ENCODE measurements at regions of chr1 and their contacts with region 1.

Region 1: DNA sequence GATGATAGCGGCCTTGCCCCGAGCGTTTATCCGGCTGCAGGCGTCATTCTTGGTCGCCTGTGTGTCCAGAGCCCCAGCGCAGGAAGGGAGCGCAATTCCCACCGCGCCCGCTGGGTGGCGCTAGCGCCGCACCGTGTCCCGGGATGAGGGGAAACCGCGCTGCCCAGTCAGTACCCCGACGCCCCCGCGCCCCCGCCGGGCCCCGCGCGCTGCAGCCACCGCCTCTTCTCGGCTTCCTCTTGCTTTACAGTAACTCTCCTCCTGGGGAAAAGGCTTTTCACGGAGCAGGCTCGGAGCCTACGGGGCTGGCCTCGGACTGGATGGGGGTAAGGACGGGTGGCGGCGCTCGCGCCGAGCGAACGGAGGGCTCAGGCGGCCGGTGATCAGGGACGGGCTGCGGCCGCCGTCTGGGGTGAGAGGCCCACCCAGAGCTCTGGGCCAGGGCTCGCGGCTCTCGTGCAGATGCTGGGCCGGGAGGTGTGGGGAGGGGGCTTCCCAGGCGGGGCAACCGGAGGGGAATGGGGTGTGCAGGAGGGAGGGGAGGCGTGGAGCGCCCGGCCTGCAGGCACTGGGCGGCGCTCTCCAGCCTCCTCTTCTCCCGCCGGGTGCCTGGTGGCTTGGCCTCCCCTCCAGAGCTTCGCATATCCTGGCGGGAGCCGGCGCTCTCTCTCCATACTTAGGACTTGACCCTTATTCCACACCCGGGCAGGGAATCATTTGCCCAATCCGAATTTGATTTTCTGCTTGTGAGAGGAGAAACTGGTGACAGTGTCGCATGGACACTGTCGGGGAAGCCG is 29.8 kb downstream of the TEX35 start:
- DNase-seq: peak; percentile 97
- ATAC-seq: peak; percentile 76
- H3K4me3 Mint-ChIP-seq: peak overlapping the region; percentile 87
- H3K27ac Mint-ChIP-seq: peak overlapping the region; percentile 91
- H3K4me1 Mint-ChIP-seq: peaks cover 23% of the 10 kb centered on the region
- H3K27me3 Mint-ChIP-seq: no peaks in the 10 kb centered on the region; the same call in 1 of the 2 replicates
- CTCF ChIP-seq: peak; percentile 100

Region 2: DNA sequence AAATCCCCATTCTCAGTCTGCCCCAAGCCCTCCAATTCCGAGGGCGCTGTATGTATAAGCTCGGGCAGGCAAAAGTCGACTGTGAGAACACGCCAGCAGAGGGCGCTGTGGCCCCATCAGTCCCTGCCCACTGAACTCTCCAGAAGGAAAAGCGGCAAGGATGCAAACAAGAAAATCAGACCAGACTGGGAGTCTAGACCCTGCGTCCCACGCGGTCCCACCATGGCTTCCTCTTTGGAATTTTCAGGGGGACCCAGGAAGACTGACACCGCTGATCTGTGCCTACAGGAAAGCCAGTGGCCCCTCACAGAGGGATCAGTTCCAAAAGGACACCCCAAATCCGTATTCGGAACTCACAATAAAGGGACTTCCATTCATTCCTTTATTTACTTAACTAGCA is 10.4 kb before region 1 on chr1:
- CTCF ChIA-PET with region 1: interaction called, 28 read pairs
- POLR2A ChIA-PET with region 1: interaction called, 3 read pairs
- DNase-seq: peak; percentile 88
- ATAC-seq: peak; percentile 89
- H3K4me3 Mint-ChIP-seq: no peak overlapping the region
- H3K27ac Mint-ChIP-seq: no peak overlapping the region
- H3K4me1 Mint-ChIP-seq: 0 out of 2 replicates have a peak, but pooled peaks cover 2% of the 10 kb centered on the region
- H3K27me3 Mint-ChIP-seq: no peaks in the 10 kb centered on the region; the same call in 1 of the 2 replicates
- CTCF ChIP-seq: peak; percentile 96

Region 3: GRCh38 chr1:178581351-178582303 is 38.9 kb after region 1 on chr1:
- CTCF ChIA-PET with region 1: interaction called, 10 read pairs
- POLR2A ChIA-PET with region 1: no interaction called
- DNase-seq: peak; percentile 77
- ATAC-seq: peak; percentile 95
- H3K4me3 Mint-ChIP-seq: peak overlapping the region; percentile 42
- H3K27ac Mint-ChIP-seq: peak overlapping the region; percentile 98
- H3K4me1 Mint-ChIP-seq: peaks cover 59% of the 10 kb centered on the region
- H3K27me3 Mint-ChIP-seq: peaks cover 5% of the 10 kb centered on the region
- CTCF ChIP-seq: no peak

Region 4: DNA sequence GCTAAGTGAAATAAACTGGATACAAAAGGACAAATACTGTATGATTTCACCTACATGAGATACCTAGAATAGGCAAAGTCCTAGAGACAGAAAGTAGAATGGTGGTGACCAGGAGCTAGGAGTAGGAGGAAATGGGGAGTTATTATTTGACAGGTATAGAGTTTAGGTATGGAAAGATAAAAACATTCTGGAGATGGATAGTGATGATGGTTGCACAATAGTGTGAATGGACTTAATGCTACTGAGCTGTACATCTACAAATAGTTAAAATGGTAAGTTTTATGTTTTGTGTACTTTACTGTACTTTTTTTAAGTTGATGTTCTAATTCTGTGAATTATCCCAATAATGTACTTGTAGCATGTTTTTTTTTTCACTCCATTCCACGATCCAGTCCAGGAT is 122.8 kb after region 1 on chr1:
- CTCF ChIA-PET with region 1: no interaction called
- POLR2A ChIA-PET with region 1: no interaction called
- DNase-seq: no peak
- ATAC-seq: no peak
- H3K4me3 Mint-ChIP-seq: no peak overlapping the region
- H3K27ac Mint-ChIP-seq: no peak overlapping the region
- H3K4me1 Mint-ChIP-seq: no peaks in the 10 kb centered on the region
- H3K27me3 Mint-ChIP-seq: no peaks in the 10 kb centered on the region; the same call in 1 of the 2 replicates
- CTCF ChIP-seq: no peak

Region 5: GRCh38 chr1:178725603-178726517 is 183.1 kb after region 1 on chr1:
- CTCF ChIA-PET with region 1: interaction called, 19 read pairs
- POLR2A ChIA-PET with region 1: interaction called, 10 read pairs
- DNase-seq: peak; percentile 62
- ATAC-seq: peak; percentile 80
- H3K4me3 Mint-ChIP-seq: peak overlapping the region; percentile 88
- H3K27ac Mint-ChIP-seq: peak overlapping the region; percentile 94
- H3K4me1 Mint-ChIP-seq: peaks cover 31% of the 10 kb centered on the region
- H3K27me3 Mint-ChIP-seq: no peaks in the 10 kb centered on the region
- CTCF ChIP-seq: no peak

Region 6: DNA sequence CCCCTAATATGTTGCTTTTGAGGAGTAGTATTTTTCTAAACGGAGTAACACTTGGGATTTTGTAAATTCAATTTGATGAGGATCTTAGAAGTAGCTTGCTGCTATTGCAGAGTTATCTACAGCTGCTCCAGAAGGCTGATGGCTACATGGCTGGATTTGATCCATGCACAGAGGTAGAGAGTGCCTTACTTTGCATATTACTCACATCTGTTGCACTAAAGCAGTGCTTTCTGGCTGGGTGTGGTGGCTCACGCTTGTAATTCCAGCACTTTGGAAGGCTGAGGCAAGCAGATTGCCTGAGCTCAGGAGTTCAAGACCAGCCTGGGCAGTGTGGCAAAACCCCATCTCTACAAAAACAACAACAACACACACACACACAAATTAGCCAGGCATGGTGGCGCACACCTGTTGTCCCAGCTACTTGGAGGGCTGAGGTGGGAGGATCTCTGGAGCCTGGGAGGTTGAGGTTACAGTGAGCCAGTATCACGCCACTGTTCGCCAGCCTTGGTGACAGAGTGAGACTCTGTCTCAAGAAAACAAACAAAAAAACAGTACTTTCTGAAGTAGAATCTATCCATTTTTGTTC is 206.9 kb after region 1 on chr1:
- CTCF ChIA-PET with region 1: interaction called, 33 read pairs
- POLR2A ChIA-PET with region 1: no interaction called
- DNase-seq: no peak
- ATAC-seq: no peak
- H3K4me3 Mint-ChIP-seq: no peak overlapping the region
- H3K27ac Mint-ChIP-seq: peak overlapping the region; percentile 29; the same call in 1 of the 2 replicates
- H3K4me1 Mint-ChIP-seq: no peaks in the 10 kb centered on the region
- H3K27me3 Mint-ChIP-seq: no peaks in the 10 kb centered on the region
- CTCF ChIP-seq: no peak

Measured in WTC11 (cell line).